ENCODE measurements at regions of chr3 and their contacts with region 1.

Region 1: DNA sequence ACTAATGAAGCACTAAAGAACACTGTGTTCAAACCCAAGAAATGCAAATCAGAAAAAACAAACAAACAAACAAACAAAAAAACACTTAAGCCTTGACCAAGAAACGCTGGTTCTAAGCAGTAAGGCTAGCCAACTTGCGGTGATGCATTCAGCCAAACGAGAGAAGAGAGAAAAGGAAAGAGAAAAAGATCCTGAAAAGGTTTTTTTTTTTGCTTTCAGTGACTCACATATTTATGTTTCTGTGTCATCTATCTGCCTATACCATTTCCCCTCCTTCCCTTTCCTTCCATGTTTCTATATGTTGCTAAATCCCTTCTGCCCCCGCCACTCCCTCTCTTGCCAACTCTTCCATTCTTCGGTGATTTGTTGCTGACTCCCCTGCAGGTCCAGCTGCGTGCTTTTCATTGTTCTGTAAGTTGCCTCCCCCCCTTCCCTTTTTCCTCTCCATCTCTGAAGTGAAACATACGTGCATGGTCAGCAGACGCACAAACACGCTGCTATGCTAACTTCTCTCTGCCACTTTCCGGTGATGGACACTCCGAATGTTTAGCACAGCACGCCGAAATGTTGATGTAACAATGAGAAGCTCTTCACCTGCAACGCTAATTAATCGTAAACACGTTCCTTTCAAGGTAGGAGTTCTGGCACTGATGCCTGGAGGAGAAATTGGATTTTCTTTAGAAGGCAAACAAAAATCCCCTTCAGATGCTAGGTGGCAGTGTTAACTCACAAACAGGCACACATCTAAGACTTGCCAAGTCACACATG is 154.4 kb downstream of the TUSC7 start:
- DNase-seq: peak; percentile 30
- H3K4me3 Mint-ChIP-seq: no peak overlapping the region
- H3K27ac Mint-ChIP-seq: no peak overlapping the region
- H3K4me1 Mint-ChIP-seq: no peaks in the 10 kb centered on the region
- H3K27me3 Mint-ChIP-seq: no peaks in the 10 kb centered on the region
- CTCF ChIP-seq: peak; percentile 21

Region 2: DNA sequence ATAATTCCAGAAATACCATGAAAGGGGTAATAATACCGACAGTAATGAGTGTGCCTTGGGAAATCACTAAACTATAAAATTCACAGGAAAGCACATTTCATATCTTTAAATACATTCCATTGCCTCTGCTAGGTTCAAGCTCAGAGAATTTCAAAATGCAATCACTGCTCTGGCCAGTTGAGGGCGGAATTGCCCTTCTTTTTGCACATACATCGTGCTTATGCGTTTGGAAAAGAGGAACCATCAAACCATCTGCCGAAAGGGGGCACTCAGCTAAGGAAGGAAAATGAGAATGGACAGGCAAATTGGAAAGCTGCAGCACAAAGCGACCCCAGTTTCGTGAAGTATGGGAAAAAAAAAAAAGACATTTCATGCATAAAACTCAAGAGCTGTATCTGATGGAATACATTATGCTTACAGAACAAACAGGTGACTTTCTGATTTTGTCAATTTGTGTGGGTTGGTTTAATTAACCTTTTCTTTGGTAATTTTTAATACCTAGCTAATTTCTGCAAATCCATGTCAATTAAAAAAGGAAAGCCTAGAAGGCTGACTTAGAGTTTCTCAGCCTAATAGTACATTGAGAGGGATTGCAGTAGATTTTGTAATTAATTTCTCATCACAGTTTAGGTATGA is 93.1 kb before region 1 on chr3:
- CTCF ChIA-PET with region 1: interaction called, 4 read pairs
- intact Hi-C with region 1: loop called (anchors 2 kb)
- DNase-seq: peak; percentile 77
- H3K4me3 Mint-ChIP-seq: no peak overlapping the region
- H3K27ac Mint-ChIP-seq: no peak overlapping the region
- H3K4me1 Mint-ChIP-seq: no peaks in the 10 kb centered on the region
- H3K27me3 Mint-ChIP-seq: peaks cover 13% of the 10 kb centered on the region
- CTCF ChIP-seq: peak; percentile 83

Region 3: GRCh38 chr3:117355566-117355965 is 491.6 kb after region 1 on chr3:
- CTCF ChIA-PET with region 1: no interaction called
- intact Hi-C with region 1: loop called (anchors 1 kb)
- DNase-seq: peak; percentile 27
- H3K4me3 Mint-ChIP-seq: no peak overlapping the region
- H3K27ac Mint-ChIP-seq: no peak overlapping the region
- H3K4me1 Mint-ChIP-seq: no peaks in the 10 kb centered on the region
- H3K27me3 Mint-ChIP-seq: no peaks in the 10 kb centered on the region
- CTCF ChIP-seq: peak; percentile 32

Region 4: GRCh38 chr3:117526470-117527079 is 662.6 kb after region 1 on chr3:
- CTCF ChIA-PET with region 1: interaction called, 3 read pairs
- intact Hi-C with region 1: loop called (anchors 2 kb)
- DNase-seq: peak; percentile 49
- H3K4me3 Mint-ChIP-seq: no peak overlapping the region
- H3K27ac Mint-ChIP-seq: no peak overlapping the region
- H3K4me1 Mint-ChIP-seq: no peaks in the 10 kb centered on the region
- H3K27me3 Mint-ChIP-seq: no peaks in the 10 kb centered on the region
- CTCF ChIP-seq: no peak

Region 5: GRCh38 chr3:117719316-117719926 is 855.4 kb after region 1 on chr3:
- CTCF ChIA-PET with region 1: no interaction called
- intact Hi-C with region 1: loop called (anchors 10 kb)
- DNase-seq: peak; percentile 18
- H3K4me3 Mint-ChIP-seq: no peak overlapping the region
- H3K27ac Mint-ChIP-seq: no peak overlapping the region
- H3K4me1 Mint-ChIP-seq: no peaks in the 10 kb centered on the region
- H3K27me3 Mint-ChIP-seq: no peaks in the 10 kb centered on the region
- CTCF ChIP-seq: peak; percentile 37

Region 6: GRCh38 chr3:118817748-118818165 is 1953.8 kb after region 1 on chr3:
- CTCF ChIA-PET with region 1: no interaction called
- intact Hi-C with region 1: loop called (anchors 10 kb)
- DNase-seq: peak; percentile 54
- H3K4me3 Mint-ChIP-seq: no peak overlapping the region
- H3K27ac Mint-ChIP-seq: no peak overlapping the region
- H3K4me1 Mint-ChIP-seq: no peaks in the 10 kb centered on the region
- H3K27me3 Mint-ChIP-seq: no peaks in the 10 kb centered on the region
- CTCF ChIP-seq: peak; percentile 73

Measured in Calu3 (cell line).